ENCODE measurements at regions of chr7 and their contacts with region 1.

Region 1: DNA sequence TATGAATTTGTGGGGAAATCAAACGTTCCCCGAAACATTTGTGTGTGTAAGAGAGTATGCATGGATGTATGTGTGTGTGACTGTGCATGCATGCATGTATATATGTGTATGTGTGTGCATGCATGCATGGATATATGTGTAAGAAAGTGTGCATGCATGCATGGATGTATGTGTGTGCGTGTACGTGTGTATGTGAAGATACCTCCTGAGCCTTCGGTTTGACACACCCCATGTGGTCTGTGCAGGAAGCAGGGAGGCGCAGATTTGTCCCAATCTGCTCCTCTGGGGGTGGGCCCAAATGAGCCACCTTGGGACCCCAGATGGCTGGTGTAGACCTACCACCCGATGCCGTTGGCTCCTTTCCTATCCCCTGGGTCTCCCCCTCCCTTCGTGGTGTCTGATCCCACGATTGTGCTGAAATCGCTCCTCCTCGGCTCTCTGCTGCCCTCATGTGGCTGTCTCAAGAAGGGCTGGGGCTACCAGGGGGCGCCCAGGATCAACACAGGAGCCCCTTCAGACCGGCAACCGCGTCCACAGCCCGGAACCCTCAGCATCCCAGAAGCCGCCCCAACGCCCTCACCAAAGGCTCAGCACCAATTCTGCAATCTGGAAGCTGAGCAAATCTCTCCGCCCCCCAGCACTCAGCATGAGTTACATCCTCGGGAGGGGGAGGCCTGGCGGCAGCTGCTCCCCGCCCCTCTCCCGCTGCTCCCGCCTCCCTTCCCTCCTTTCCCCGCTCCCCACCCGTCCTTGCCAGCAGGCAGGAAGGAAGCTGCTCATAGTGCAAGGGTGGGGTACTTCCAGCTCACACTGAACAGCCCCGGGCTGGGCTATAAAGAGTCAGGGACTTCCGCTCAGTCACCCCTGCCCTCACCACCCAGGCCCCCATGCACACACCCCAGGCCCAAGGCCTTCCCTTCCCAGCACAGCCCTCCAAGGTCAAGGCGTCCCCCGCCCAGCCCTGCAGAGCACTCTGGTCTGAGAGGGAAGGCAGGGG is 2.3 kb upstream of the NOS3 start:
- DNase-seq: no peak
- H3K4me3 ChIP-seq: no peak overlapping the region
- CTCF ChIP-seq: peak; percentile 72

Region 2: DNA sequence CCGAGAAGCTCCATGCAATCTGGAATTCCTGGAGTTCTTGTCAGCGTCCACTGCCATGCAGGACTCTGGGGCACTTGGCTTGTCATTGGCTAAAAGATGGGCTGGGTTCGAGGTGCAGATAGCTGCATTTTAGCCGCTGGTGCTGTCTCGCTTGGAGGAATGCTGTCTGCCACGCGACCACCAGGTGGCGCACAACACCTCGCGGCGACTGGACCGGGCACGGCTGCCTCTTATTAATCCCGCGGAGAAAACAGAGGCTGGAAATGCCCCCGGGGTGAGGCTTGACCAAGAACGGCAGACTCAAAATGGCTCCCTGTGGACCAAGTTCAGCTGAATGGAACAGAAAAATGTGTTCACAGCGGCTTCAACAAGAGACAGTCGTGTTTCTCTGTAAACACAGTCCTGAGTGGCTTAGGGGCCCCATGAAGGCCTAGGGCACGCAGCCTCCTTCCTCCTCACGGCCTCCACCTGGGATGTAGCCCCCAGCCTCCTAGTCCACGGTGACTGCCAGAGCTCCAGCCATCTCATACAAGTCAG is 90.0 kb before region 1 on chr7:
- CTCF ChIA-PET with region 1: interaction called, 53 read pairs
- POLR2A ChIA-PET with region 1: no interaction called
- DNase-seq: no peak
- H3K4me3 ChIP-seq: no peak overlapping the region
- CTCF ChIP-seq: peak; percentile 95

Region 3: GRCh38 chr7:150962553-150963399 is 25.8 kb before region 1 on chr7:
- CTCF ChIA-PET with region 1: interaction called, 41 read pairs
- POLR2A ChIA-PET with region 1: no interaction called
- DNase-seq: no peak
- H3K4me3 ChIP-seq: no peak overlapping the region
- CTCF ChIP-seq: peak; percentile 97

Region 4: GRCh38 chr7:150974468-150975391 is 13.8 kb before region 1 on chr7:
- CTCF ChIA-PET with region 1: interaction called, 41 read pairs
- POLR2A ChIA-PET with region 1: no interaction called
- DNase-seq: no peak
- H3K4me3 ChIP-seq: peak overlapping the region; percentile 34
- CTCF ChIP-seq: peak; percentile 17

Region 5: GRCh38 chr7:151003572-151003971 is 15.0 kb after region 1 on chr7:
- CTCF ChIA-PET with region 1: interaction called, 33 read pairs
- POLR2A ChIA-PET with region 1: no interaction called
- DNase-seq: no peak
- H3K4me3 ChIP-seq: no peak overlapping the region
- CTCF ChIP-seq: no peak

Region 6: DNA sequence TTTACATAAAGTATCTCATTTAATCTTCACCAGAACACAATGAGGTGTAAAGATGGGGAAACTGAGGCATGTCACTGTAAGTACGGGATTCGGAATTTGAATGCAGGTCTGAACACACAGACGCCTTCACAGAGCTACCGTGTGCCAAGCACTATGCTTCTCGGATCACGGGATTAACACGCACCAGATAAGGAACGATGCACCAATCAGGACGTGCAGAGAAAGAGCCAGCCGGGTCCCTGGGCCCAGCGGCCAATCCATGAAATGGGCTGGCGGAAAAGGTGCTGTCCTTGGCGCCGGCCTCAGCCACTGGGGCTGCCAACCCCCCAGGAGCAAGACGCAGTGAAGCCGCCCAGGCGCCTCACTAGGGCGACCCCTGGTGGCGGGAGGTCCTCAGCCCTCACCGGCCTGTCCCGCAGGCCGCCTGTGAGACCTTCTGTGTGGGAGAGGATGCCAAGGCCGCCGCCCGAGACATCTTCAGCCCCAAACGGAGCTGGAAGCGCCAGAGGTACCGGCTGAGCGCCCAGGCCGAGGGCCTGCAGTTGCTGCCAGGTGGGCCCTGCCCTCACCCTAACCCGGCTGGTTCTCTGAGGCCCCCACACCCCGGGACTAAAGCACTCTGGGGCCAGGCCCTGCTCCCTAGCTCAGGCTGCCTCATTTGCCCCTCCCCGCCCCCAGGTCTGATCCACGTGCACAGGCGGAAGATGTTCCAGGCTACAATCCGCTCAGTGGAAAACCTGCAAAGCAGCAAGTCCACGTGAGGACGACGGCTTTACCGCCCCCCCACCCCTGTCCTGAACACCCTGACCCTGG is 20.2 kb after region 1 on chr7:
- CTCF ChIA-PET with region 1: interaction called, 33 read pairs
- POLR2A ChIA-PET with region 1: no interaction called
- DNase-seq: no peak
- H3K4me3 ChIP-seq: peak overlapping the region; percentile 18
- CTCF ChIP-seq: peak; percentile 68